Vagina (tissue), 2 donors: ENCODE measurements at regions of chr3 and their contacts with region 1.

Region 1: DNA sequence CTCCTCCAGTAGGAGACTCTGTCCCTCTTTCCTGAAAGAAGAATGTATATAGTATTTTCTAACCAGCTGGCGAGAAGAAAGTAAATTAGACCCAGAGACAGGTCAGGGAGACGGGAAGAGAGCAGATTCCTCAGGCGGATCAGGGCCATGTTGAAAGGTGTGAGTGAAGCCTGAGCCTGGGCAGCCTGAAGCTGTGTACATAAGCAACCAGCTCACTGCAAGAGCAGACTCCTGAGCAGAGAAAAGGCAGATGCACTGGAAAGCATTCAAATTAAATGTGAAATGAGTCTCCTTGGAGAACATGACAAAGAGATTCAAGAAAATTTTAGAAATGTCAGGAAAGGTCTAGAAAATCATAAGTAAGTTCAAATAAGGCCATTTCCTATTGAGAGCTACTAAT is 165.8 kb downstream of the GOLIM4 start:
- DNase-seq: no peak
- H3K4me3 ChIP-seq: no peak overlapping the region
- H3K27ac ChIP-seq: no peak overlapping the region
- H3K4me1 ChIP-seq: no peaks in the 10 kb centered on the region
- H3K27me3 ChIP-seq: no peaks in the 10 kb centered on the region
- CTCF ChIP-seq: no peak
- POLR2A ChIP-seq: no peak

Region 2: GRCh38 chr3:167882067-167882667 is 47.8 kb before region 1 on chr3:
- intact Hi-C with region 1: no loop called
- DNase-seq: no peak
- H3K4me3 ChIP-seq: no peak overlapping the region
- H3K27ac ChIP-seq: no peak overlapping the region
- H3K4me1 ChIP-seq: no peaks in the 10 kb centered on the region
- H3K27me3 ChIP-seq: no peaks in the 10 kb centered on the region
- CTCF ChIP-seq: peak; percentile 31 to 57 (median 47)
- POLR2A ChIP-seq: no peak

Region 3: DNA sequence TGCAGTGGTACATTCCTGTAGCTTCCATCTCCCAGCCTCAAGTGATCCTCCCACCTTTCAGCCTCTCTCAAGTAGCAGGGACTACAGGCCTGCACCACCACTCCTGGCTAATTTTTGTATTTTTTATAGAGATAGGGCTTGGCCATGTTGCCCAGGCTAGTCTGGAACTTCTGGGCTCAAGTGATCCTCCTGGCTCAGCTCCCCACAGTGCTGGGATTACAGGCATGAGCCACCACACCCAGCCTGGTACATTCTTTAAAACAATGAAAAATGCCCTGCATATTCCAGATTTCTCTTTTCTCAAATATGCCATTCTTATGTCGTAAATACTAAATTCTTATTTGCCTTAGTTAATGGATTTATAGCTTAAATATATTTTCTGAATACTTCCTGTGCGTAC is 1152.1 kb after region 1 on chr3:
- intact Hi-C with region 1: loop called (anchors 5 kb)
- DNase-seq: no peak
- H3K4me3 ChIP-seq: no peak overlapping the region
- H3K27ac ChIP-seq: no peak overlapping the region
- H3K4me1 ChIP-seq: peaks cover 22% of the 10 kb centered on the region
- H3K27me3 ChIP-seq: no peaks in the 10 kb centered on the region
- CTCF ChIP-seq: no peak
- POLR2A ChIP-seq: no peak